ENCODE measurements at regions of chr19 and their contacts with region 1.

Region 1: DNA sequence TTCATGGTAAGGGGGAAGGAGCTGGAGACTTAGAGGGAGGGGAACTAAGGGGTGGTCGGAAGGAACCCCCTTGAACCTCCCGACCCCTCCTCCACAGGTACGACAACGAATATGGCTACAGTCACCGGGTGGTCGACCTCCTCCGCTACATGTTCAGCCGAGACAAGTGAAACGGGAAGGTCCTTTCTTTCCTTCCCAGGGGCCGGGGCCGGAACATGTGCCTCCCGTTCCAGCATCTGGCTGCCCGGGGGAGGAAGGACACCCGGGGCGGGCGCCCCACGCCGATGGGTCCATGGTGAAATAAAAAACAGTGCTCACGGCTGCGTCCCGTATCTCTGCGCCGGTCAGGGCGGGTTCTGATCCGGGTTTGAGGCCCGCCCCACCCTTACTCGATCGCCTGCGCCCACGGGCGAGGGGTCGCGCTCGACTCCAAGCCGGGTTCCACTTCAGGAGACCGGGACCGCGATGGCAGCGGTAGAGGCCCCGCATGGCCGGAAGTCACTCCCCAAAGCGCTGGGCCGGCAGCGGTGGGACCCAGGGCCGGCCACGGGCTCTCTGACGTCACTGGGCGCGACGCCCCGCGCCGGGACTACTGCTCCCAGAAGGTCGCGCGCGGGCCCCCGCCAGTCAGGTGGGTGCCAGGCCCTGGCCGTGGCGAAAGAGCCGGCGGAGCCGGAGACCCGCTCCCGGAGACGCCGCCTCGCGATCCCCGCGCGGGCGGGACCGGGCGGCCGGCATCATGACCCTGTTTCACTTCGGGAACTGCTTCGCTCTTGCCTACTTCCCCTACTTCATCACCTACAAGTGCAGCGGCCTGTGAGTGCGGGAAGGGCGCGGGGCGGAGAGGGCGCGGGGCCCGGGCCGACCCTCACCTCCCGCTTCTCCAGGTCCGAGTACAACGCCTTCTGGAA is at the start of gene TMEM147:
- DNase-seq: peak; percentile 87 to 99 (median 92)

Region 2: GRCh38 chr19:35612559-35613321 is 67.5 kb after region 1 on chr19 and contains the start of gene HAUS5:
- intact Hi-C with region 1: loop called (anchors 2 kb)
- DNase-seq: peak; percentile 85 to 99 (median 93)

Region 3: DNA sequence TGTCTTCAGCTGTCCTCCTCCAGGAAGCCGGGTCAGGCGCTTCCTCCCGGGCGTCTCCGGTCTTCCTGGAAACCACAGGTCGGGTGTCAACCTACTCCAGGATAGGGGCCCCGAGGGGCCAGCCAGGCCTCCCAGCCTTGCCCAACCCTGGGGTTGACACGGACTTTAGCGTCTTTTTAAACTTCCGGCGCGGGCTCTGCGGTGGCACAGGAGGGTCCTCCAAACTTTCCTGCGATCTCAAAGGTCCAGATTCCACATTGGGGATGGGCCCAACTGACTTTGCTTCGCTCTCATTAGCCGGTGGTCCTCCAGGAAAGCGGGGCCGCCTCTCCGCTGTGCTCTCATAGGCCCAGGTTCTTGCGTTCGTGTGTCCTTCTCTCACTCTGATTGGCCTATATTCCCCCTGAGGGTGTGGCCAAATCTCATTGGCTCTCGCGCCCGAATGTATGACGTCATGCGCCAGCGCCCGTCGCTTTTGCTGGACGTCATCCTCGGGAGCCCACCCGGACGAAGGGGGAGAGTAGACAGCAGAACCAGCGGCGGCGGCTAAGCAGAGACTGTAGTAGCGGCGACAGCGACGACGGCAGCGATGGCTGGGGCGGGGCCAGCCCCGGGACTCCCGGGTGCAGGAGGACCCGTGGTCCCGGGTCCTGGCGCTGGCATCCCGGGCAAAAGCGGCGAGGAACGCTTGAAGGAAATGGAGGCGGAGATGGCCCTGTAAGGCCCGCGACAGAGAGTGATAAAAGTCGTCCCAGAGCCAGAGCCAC is 83.5 kb after region 1 on chr19 and contains the start of gene RBM42:
- intact Hi-C with region 1: loop called (anchors 5 kb)
- DNase-seq: peak; percentile 90 to 99 (median 94)

Region 4: GRCh38 chr19:35716801-35717666 is 171.8 kb after region 1 on chr19:
- intact Hi-C with region 1: loop called (anchors 1 kb)
- DNase-seq: peak; percentile 83 to 99 (median 94)